K562 (cell line): ENCODE measurements at regions of chr6 and their contacts with region 1.

Region 1: GRCh38 chr6:41787219-41787917 is at the start of gene TOMM6:
- DNase-seq: peak; percentile 87 to 99 (median 91)
- ATAC-seq: peak; percentile 87
- H3K4me3 ChIP-seq: peak within 1 kb of the TSS; percentile 87
- H3K27ac ChIP-seq: peak within 1 kb of the TSS; percentile 93
- H3K4me1 ChIP-seq: peaks cover 30 to 33% of the 10 kb centered on the region in 2 experiments
- H3K27me3 ChIP-seq: no peaks in the 10 kb centered on the region
- CTCF ChIP-seq: peak; percentile 96 to 97 (median 97)
- EP300 ChIP-seq: peak; percentile 44; the same call in 1 of the 2 replicates
- POLR2A ChIP-seq: peak; percentile 99
- RAD21 ChIP-seq: peak in 1 of 2 experiments; percentile 22; a peak in 1 of 4 replicates
- polyA plus RNA-seq, gene TOMM6: 1,746 to 1,760 TPM

Region 2: DNA sequence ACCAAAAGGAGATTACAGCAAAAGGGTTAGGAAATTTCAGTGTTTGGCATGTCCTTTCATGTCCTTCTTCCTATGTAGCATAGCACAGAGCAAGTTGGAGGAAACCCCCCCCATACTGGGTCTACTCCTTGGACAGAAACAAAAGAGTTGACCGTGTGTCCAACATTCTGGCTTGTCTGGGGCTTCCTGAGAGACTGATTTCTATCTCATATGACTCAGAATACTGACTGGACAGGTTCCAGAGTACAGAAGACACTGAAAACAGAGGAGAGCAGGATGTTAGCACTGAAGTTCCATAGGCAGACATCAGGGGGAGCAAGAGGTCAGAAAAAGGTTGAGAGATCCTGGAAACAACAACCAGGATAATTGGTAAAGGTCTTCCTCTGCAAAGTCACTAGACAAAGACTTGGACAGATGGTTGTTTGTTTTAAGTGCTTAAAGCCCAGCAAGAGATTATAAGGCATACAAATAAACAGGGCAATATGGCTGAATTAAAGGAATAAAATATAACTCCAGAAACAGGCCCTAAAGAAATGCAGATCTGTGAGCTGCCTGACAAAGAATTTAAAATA is 59.4 kb after region 1 on chr6:
- CTCF ChIA-PET with region 1: no interaction called
- POLR2A ChIA-PET with region 1: no interaction called
- in situ Hi-C with region 1: no loop called
- intact Hi-C with region 1: loop called (anchors 5 kb)
- DNase-seq: peak; percentile 75 to 92 (median 83)
- ATAC-seq: peak; percentile 99
- H3K4me3 ChIP-seq: no peak overlapping the region
- H3K27ac ChIP-seq: peak overlapping the region; percentile 67
- H3K4me1 ChIP-seq: peaks cover 2 to 7% of the 10 kb centered on the region in 2 experiments; a peak in 3 of 5 replicates
- H3K27me3 ChIP-seq: no peaks in the 10 kb centered on the region
- CTCF ChIP-seq: peak; percentile 85 to 98 (median 93)
- EP300 ChIP-seq: peak; percentile 69
- POLR2A ChIP-seq: no peak
- RAD21 ChIP-seq: peak; percentile 91 to 96

Region 3: GRCh38 chr6:41909727-41910126 is 122.4 kb after region 1 on chr6:
- CTCF ChIA-PET with region 1: no interaction called
- POLR2A ChIA-PET with region 1: interaction called, 3 read pairs
- in situ Hi-C with region 1: loop called (anchors 5 kb)
- intact Hi-C with region 1: no loop called
- DNase-seq: no peak
- ATAC-seq: no peak
- H3K4me3 ChIP-seq: no peak overlapping the region
- H3K27ac ChIP-seq: no peak overlapping the region
- H3K4me1 ChIP-seq: no peaks in the 10 kb centered on the region; a peak in 2 of 5 replicates
- H3K27me3 ChIP-seq: no peaks in the 10 kb centered on the region
- CTCF ChIP-seq: no peak
- EP300 ChIP-seq: no peak
- POLR2A ChIP-seq: no peak
- RAD21 ChIP-seq: no peak

Region 4: DNA sequence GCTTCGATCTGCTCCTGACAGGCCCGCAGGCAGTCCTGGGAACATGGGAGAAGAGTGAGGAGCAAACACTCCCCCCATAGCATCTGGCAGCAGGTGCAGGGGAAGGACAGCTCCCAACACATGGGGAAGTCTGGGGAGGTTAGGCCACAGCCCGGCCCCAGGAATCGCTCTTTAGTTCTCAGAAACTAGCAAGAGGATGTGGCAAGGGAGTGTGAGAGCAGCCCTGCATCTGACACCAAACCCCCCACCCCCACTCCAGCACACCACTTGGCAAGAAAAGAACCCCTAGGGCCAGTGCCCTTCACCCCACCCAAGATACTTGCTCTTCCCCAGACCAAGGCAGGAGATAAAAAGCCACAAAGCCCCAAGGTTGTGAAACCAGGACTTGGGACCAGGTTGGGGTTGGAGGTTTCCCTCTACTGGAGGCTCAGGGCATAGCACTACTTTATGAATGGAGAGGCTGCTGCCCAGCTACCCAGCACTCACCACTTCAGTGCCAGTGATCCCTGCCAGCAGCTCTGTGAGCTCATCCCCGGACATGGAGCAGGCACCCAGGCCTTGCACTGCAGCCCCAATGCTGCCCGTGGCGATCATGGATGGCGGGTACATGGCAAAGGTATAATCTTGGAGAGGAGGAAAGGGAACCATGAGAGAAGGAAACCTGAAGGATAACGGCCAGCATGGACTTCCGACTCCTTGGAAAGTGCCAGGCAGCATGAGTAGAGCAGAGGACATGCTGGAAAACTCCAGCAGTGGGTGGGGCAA is 148.9 kb after region 1 on chr6:
- CTCF ChIA-PET with region 1: no interaction called
- POLR2A ChIA-PET with region 1: interaction called, 10 read pairs
- in situ Hi-C with region 1: no loop called
- intact Hi-C with region 1: loop called (anchors 2 kb)
- DNase-seq: peak; percentile 65 to 95 (median 78)
- ATAC-seq: peak; percentile 65
- H3K4me3 ChIP-seq: no peak overlapping the region
- H3K27ac ChIP-seq: peak overlapping the region; percentile 50
- H3K4me1 ChIP-seq: peaks cover 54 to 58% of the 10 kb centered on the region in 2 experiments
- H3K27me3 ChIP-seq: no peaks in the 10 kb centered on the region
- CTCF ChIP-seq: peak; percentile 91 to 98 (median 95)
- EP300 ChIP-seq: peak; percentile 85
- POLR2A ChIP-seq: no peak; the same call in 1 of the 2 replicates
- RAD21 ChIP-seq: peak; percentile 87 to 90

Region 5: GRCh38 chr6:41966961-41967311 is 179.6 kb after region 1 on chr6:
- CTCF ChIA-PET with region 1: no interaction called
- POLR2A ChIA-PET with region 1: no interaction called
- in situ Hi-C with region 1: no loop called
- intact Hi-C with region 1: no loop called
- DNase-seq: peak; percentile 81 to 86 (median 83)
- ATAC-seq: peak; percentile 86
- H3K4me3 ChIP-seq: no peak overlapping the region
- H3K27ac ChIP-seq: peak overlapping the region; percentile 81
- H3K4me1 ChIP-seq: peaks cover 19 to 37% of the 10 kb centered on the region in 2 experiments
- H3K27me3 ChIP-seq: no peaks in the 10 kb centered on the region
- CTCF ChIP-seq: no peak
- EP300 ChIP-seq: peak; percentile 45; the same call in 1 of the 2 replicates
- POLR2A ChIP-seq: 0 out of 2 replicates have a peak, but pooled peaks have one; percentile 15
- RAD21 ChIP-seq: no peak

Region 6: GRCh38 chr6:42050266-42051032 is 263.1 kb after region 1 on chr6 and contains the start of gene TAF8:
- CTCF ChIA-PET with region 1: interaction called, 17 read pairs
- POLR2A ChIA-PET with region 1: interaction called, 17 read pairs
- in situ Hi-C with region 1: loop called (anchors 5 kb)
- intact Hi-C with region 1: no loop called
- DNase-seq: peak; percentile 94 to 99 (median 96)
- ATAC-seq: peak; percentile 91
- H3K4me3 ChIP-seq: peak within 1 kb of the TSS; percentile 86
- H3K27ac ChIP-seq: peak within 1 kb of the TSS; percentile 98
- H3K4me1 ChIP-seq: peaks cover 38 to 41% of the 10 kb centered on the region in 2 experiments
- H3K27me3 ChIP-seq: no peaks in the 10 kb centered on the region
- CTCF ChIP-seq: peak in 1 of 3 experiments; percentile 5; a peak in 2 of 6 replicates
- EP300 ChIP-seq: no peak
- POLR2A ChIP-seq: peak; percentile 100
- RAD21 ChIP-seq: no peak
- polyA plus RNA-seq, gene TAF8: 58.9 to 84.0 TPM